Motor neuron (in vitro differentiated cells): ENCODE measurements at regions of chr20 and their contacts with region 1.

Region 1: DNA sequence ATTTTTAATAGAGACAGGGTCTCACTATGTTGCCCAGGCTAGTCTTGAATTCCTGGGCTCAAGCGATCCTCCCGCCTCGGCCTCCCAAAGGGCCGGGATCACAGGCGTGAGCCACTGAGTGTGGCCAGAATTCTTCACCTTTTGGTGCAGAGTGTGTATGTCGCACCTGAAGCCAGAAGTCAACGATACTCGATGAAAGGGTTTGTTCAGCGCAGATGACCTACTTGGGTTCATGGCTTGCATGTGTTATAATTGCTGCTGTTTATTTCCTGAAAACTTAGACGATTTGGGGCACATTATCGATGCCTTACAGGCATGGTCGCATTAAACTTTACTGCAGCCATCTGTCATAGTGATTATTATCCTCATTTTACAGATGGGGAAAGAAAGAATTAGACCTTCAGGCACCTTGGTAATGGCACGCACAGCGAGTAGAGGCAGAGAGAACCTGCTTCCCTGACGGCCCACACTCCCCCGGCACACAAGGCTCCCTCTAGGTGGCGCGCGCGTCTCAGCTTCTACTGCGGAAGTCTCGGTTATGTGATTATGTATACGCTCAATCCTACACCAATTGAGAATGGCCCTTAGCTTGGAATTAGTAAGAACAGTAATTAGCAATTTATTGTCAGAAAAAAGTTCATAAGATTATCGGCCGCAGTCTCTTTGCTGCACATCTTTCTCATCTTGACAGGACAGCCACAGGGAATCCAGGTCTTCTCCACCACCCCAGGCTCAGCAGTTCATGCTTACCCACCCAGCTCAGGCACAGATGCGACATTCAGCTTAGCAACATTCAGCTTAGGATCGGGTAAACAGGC is 212.8 kb upstream of the PROKR2 start:
- ATAC-seq: peak; percentile 49 to 92 (median 88)
- H3K4me3 ChIP-seq: no peak overlapping the region
- H3K27ac ChIP-seq: no peak overlapping the region
- H3K4me1 ChIP-seq: no peaks in the 10 kb centered on the region

Region 2: GRCh38 chr20:5630071-5630470 is 100.5 kb after region 1 on chr20:
- in situ Hi-C with region 1: no loop called
- ATAC-seq: no peak
- H3K4me3 ChIP-seq: no peak overlapping the region
- H3K27ac ChIP-seq: no peak overlapping the region
- H3K4me1 ChIP-seq: no peaks in the 10 kb centered on the region

Region 3: GRCh38 chr20:5642155-5642981 is 112.8 kb after region 1 on chr20:
- in situ Hi-C with region 1: no loop called
- ATAC-seq: no peak
- H3K4me3 ChIP-seq: no peak overlapping the region
- H3K27ac ChIP-seq: no peak overlapping the region
- H3K4me1 ChIP-seq: no peaks in the 10 kb centered on the region

Region 4: DNA sequence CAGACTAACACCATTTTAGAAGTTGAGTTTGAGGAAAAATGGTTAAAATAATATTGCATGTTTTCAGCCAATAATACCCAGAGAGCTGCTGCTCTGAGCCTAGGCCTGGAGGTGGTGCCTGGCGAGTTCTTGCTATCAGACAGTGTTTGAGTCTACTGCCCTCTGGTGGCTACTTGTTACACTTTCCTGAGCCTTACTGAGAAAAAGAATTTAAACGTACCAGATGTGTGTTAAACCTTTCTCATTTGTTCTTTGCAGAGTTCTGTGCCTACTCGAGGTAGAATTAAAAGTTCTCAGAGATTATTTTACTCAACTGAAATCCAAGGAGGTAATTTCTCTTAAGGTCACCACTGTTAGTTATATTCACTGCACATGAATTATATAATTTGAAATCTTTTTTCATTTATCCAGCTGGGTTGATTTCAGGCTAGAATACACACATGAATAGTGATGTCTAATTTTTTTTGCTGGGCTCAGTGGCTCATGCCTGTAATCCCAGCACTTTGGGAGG is 258.9 kb after region 1 on chr20:
- in situ Hi-C with region 1: loop called in 5 of 9 experiments (anchors 25 kb)
- ATAC-seq: peak; percentile 73 to 96 (median 86)
- H3K4me3 ChIP-seq: no peak overlapping the region
- H3K27ac ChIP-seq: no peak overlapping the region
- H3K4me1 ChIP-seq: no peaks in the 10 kb centered on the region

Region 5: DNA sequence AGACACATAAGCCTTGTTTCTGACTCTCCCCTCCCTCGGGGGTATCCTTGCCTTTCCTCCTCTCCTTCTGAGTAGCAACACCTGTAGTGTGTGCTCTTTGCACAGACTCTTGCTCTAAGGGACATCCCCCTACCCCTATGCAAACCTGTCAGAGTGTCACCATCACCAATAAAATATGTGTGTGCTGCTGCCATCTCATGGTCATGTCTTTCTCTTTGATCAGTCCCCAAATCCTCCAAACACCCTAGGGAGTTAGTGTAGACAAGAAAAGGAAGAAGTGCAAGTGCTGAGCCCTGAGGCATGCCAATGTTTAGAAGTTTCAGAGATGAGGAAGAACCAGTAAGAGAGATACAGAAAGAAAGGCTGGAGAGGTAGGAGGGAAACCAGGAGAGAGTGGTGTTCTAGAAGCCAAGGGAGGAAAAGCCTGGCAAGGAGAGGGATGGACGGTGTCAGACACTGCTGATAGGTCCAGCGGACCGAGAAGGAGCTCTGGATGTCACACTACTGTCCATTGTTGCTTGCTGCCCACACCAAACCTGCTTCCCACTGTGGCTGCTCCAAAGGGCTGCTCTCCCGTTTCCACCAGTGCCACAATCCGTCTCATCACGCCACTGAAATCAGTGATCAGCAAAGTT is 404.4 kb after region 1 on chr20:
- in situ Hi-C with region 1: loop called in 1 of 9 experiments (anchors 25 kb)
- ATAC-seq: peak in 2 of 8 experiments; percentile 17 to 42
- H3K4me3 ChIP-seq: no peak overlapping the region
- H3K27ac ChIP-seq: no peak overlapping the region
- H3K4me1 ChIP-seq: no peaks in the 10 kb centered on the region

Region 6: DNA sequence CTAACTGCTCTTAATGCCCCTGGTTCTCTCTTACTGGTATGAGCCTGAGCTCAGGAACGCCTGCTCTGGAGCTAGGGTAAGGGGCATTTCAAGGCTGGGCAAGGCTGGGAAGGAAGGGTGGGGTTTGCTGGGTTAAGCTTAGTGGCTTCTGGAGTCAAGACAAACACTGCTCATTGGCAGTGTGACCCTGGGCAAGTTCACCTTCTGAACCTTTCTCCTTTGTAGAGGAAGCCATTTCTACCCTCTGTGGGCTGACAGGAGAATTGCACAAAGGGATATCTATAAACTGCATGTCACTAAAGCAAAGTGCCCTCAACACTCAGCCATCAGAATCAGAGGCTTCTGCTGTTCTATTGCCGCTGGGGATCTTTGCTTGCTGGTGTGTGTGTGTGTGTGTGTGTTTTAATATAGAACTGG is 544.6 kb after region 1 on chr20:
- in situ Hi-C with region 1: loop called in 3 of 9 experiments (anchors 10 to 25 kb)
- ATAC-seq: peak in 4 of 8 experiments; percentile 11 to 83 (median 19)
- H3K4me3 ChIP-seq: no peak overlapping the region
- H3K27ac ChIP-seq: no peak overlapping the region
- H3K4me1 ChIP-seq: no peaks in the 10 kb centered on the region

Region 7: DNA sequence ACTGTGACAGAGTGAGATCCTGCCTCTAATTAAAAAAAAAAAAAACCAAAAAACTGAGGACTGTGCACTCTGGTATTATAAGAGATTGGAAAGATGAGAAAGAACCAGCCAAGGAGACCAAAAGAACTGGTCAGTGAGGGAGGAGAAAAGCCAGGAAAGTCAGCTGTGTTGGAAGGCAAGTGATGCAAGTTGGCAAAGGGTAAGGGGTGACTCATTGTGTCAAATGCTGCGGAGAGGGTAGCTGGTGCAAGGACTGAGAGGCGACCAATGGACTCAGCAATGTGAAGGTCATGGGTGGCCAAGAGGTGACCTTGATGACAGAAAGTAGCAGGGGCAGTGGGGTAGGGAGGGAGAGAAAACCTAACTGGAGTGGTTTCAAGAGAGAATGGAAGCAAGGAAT is 551.7 kb after region 1 on chr20:
- in situ Hi-C with region 1: loop called in 4 of 9 experiments (anchors 10 to 25 kb)
- ATAC-seq: no peak
- H3K4me3 ChIP-seq: no peak overlapping the region
- H3K27ac ChIP-seq: no peak overlapping the region
- H3K4me1 ChIP-seq: no peaks in the 10 kb centered on the region